ENCODE measurements at regions of chr17 and their contacts with region 1.

Region 1: GRCh38 chr17:4565209-4566141 is 5.1 kb upstream of the GGT6 start:
- DNase-seq: peak; percentile 75
- ATAC-seq: peak; percentile 84
- H3K4me3 Mint-ChIP-seq: peak overlapping the region; percentile 7
- H3K27ac Mint-ChIP-seq: no peak overlapping the region
- H3K4me1 Mint-ChIP-seq: peaks cover 40% of the 10 kb centered on the region
- H3K27me3 Mint-ChIP-seq: peaks cover 2% of the 10 kb centered on the region

Region 2: GRCh38 chr17:4487823-4488718 is 77.4 kb before region 1 on chr17:
- CTCF ChIA-PET with region 1: no interaction called
- POLR2A ChIA-PET with region 1: no interaction called
- DNase-seq: no peak
- ATAC-seq: no peak
- H3K4me3 Mint-ChIP-seq: no peak overlapping the region
- H3K27ac Mint-ChIP-seq: no peak overlapping the region
- H3K4me1 Mint-ChIP-seq: peaks cover 36% of the 10 kb centered on the region
- H3K27me3 Mint-ChIP-seq: no peaks in the 10 kb centered on the region

Region 3: DNA sequence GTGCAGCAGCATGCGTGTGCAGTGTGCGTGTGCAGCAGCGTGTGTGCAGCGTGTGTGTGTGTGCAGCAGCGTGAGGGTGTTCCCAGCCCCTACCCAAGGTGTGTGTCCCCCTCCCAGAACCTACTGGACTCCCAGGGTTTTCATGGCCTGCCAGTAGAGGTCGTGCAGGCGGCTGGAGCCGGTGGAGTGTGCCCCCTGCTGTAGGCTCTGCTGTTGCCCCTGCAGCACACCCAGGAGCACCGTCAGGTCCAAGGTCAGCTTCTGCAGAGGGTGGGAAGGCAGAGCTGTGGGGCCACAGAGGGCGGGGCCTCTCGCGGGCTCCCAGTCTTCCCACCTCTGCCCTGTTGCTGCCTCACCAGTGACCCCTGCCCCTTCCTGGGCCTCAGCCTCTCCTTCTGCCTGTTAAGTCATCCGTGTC is 25.2 kb before region 1 on chr17:
- CTCF ChIA-PET with region 1: no interaction called
- POLR2A ChIA-PET with region 1: no interaction called
- DNase-seq: no peak
- ATAC-seq: no peak
- H3K4me3 Mint-ChIP-seq: no peak overlapping the region
- H3K27ac Mint-ChIP-seq: no peak overlapping the region
- H3K4me1 Mint-ChIP-seq: peaks cover 2% of the 10 kb centered on the region
- H3K27me3 Mint-ChIP-seq: no peaks in the 10 kb centered on the region

Region 4: GRCh38 chr17:4554997-4555799 is 10.3 kb before region 1 on chr17 and contains the start of gene MYBBP1A:
- CTCF ChIA-PET with region 1: interaction called, 44 read pairs
- POLR2A ChIA-PET with region 1: interaction called, 3 read pairs
- DNase-seq: peak; percentile 98
- ATAC-seq: peak; percentile 93
- H3K4me3 Mint-ChIP-seq: peak within 1 kb of the TSS; percentile 93
- H3K27ac Mint-ChIP-seq: peak within 1 kb of the TSS; percentile 95
- H3K4me1 Mint-ChIP-seq: peaks cover 35% of the 10 kb centered on the region
- H3K27me3 Mint-ChIP-seq: no peaks in the 10 kb centered on the region
- total RNA-seq, gene MYBBP1A: 70.7 to 76.7 TPM

Region 5: GRCh38 chr17:4625181-4625617 is 59.7 kb after region 1 on chr17:
- CTCF ChIA-PET with region 1: interaction called, 67 read pairs
- POLR2A ChIA-PET with region 1: interaction called, 3 read pairs
- DNase-seq: no peak
- ATAC-seq: no peak
- H3K4me3 Mint-ChIP-seq: no peak overlapping the region
- H3K27ac Mint-ChIP-seq: no peak overlapping the region
- H3K4me1 Mint-ChIP-seq: peaks cover 3% of the 10 kb centered on the region
- H3K27me3 Mint-ChIP-seq: peaks cover 24% of the 10 kb centered on the region

Measured in activated CD8-positive, alpha-beta T cell treated with anti-CD3 and anti-CD28 coated beads, Interleukin-2, amount 10 ng/mL, durations not matched to agents 7 days and 5 days (primary cell).